ENCODE measurements at regions of chr7 and their contacts with region 1.

Region 1: DNA sequence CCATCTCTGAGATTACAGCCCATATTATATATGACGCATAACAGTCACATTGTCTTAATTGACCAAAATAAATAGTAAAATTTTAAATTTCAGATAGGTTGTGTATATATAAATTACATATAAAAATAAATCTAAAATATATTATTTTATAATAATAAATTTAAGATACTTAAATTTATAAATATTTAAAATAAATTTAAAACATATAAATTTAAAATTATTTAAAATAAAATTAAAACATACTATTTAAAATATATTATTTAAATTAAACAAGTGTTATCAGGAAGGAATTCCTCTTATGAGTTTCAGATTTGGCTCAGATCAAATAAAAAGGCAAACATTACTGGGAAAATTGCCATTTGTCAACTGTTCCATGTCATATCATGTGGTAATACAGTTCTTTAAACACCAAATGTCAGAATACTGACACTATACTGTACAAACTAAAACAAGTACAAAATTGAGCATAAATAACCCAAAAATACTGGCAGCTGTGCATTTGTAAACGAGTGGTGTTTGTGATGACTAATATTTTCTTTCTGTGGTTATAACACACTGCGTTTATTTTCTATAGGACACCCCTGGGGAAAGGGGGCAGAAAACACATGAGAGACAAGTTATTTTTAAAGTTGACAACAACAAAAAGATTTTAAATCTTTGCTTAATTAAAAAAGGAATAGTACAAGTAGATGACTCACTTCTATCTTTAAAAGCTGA is 71.3 kb upstream of the DGKB start:
- DNase-seq: no peak
- ATAC-seq: no peak
- H3K4me3 ChIP-seq: no peak overlapping the region
- H3K27ac ChIP-seq: no peak overlapping the region
- H3K4me1 ChIP-seq: no peaks in the 10 kb centered on the region
- H3K27me3 ChIP-seq: no peaks in the 10 kb centered on the region
- CTCF ChIP-seq: no peak
- EP300 ChIP-seq: no peak
- POLR2A ChIP-seq: no peak
- RAD21 ChIP-seq: no peak

Region 2: GRCh38 chr7:14685167-14685566 is 288.7 kb before region 1 on chr7:
- CTCF ChIA-PET with region 1: no interaction called
- POLR2A ChIA-PET with region 1: no interaction called
- in situ Hi-C with region 1: no loop called
- intact Hi-C with region 1: no loop called
- DNase-seq: no peak
- ATAC-seq: no peak
- H3K4me3 ChIP-seq: no peak overlapping the region
- H3K27ac ChIP-seq: no peak overlapping the region
- H3K4me1 ChIP-seq: no peaks in the 10 kb centered on the region
- H3K27me3 ChIP-seq: no peaks in the 10 kb centered on the region
- CTCF ChIP-seq: no peak
- EP300 ChIP-seq: no peak
- POLR2A ChIP-seq: no peak
- RAD21 ChIP-seq: no peak

Region 3: DNA sequence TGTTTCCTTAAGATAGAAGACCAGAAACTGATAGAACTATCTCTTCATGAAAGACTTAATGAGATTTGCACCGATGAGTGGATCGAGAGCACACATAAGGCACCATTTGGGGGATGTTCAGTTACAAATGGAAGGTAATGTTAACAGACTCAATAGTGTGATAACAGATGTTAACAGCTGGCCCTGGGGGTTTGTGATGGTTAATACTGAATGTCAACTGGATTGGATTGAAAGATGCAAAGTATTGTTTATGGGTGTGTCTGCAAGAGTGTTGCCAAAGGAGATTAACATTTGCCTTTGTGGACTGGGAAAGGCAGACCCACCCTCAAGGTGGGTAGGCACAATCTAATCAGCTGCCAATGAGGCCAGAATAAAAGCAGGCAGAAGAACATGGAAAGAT is 59.2 kb after region 1 on chr7:
- CTCF ChIA-PET with region 1: no interaction called
- POLR2A ChIA-PET with region 1: no interaction called
- in situ Hi-C with region 1: loop called (anchors 5 kb)
- intact Hi-C with region 1: no loop called
- DNase-seq: no peak
- ATAC-seq: no peak
- H3K4me3 ChIP-seq: no peak overlapping the region
- H3K27ac ChIP-seq: no peak overlapping the region
- H3K4me1 ChIP-seq: no peaks in the 10 kb centered on the region
- H3K27me3 ChIP-seq: no peaks in the 10 kb centered on the region
- CTCF ChIP-seq: no peak
- EP300 ChIP-seq: no peak
- POLR2A ChIP-seq: no peak
- RAD21 ChIP-seq: no peak

Measured in K562 (cell line).